ENCODE measurements at regions of chr2 and their contacts with region 1.

Region 1: GRCh38 chr2:143034292-143035074 is 94.7 kb upstream of the ARHGAP15 start:
- ATAC-seq: peak; percentile 43 to 86 (median 65)
- H3K4me3 ChIP-seq: no peak overlapping the region
- H3K27ac ChIP-seq: no peak overlapping the region
- H3K4me1 ChIP-seq: no peaks in the 10 kb centered on the region

Region 2: DNA sequence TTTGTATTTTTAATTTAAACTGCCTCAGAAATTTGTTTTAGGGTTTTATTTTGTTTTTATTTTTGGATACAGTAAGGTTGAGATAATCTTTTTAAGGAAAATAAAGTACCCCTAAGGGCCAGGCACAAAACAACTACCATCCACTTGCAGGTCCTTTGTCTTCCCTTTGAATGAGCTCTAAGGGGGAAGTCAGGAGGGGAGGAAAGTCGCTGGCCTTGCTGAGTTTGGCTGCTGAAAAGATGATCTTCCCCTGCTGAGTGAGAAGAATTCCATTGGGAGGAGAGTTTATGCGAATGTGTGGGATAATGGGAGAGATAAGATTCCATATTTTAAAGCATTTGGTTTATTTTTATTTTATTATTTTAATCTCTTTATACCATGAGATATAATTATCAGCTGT is 195.5 kb after region 1 on chr2:
- in situ Hi-C with region 1: loop called in 1 of 9 experiments (anchors 10 kb)
- ATAC-seq: no peak
- H3K4me3 ChIP-seq: no peak overlapping the region
- H3K27ac ChIP-seq: no peak overlapping the region
- H3K4me1 ChIP-seq: peaks cover 0 to 5% of the 10 kb centered on the region in 2 donors

Region 3: DNA sequence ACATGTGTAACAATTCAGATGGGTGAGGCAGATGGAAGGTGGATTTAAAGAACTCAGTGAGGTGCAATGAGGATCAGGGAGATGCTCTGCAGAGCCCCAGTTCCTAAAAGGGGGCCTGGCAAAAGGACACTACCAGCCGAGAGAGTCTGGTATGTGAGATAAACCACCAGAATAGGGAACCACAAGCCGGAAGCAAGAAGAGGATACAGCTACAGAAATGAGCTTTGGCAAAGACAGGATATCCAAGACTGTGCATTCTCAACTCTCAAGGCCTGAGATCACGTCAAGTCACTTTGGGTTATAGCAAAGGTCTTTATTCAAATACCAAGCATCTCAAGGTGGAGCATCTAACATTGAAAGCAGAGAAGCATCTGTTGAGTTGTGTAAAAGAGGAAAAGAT is 388.2 kb after region 1 on chr2:
- in situ Hi-C with region 1: no loop called
- ATAC-seq: no peak
- H3K4me3 ChIP-seq: no peak overlapping the region
- H3K27ac ChIP-seq: no peak overlapping the region
- H3K4me1 ChIP-seq: no peaks in the 10 kb centered on the region

Measured in motor neuron (in vitro differentiated cells).